Endothelial cell of umbilical vein (primary cell): ENCODE measurements at regions of chr2 and their contacts with region 1.

Region 1: DNA sequence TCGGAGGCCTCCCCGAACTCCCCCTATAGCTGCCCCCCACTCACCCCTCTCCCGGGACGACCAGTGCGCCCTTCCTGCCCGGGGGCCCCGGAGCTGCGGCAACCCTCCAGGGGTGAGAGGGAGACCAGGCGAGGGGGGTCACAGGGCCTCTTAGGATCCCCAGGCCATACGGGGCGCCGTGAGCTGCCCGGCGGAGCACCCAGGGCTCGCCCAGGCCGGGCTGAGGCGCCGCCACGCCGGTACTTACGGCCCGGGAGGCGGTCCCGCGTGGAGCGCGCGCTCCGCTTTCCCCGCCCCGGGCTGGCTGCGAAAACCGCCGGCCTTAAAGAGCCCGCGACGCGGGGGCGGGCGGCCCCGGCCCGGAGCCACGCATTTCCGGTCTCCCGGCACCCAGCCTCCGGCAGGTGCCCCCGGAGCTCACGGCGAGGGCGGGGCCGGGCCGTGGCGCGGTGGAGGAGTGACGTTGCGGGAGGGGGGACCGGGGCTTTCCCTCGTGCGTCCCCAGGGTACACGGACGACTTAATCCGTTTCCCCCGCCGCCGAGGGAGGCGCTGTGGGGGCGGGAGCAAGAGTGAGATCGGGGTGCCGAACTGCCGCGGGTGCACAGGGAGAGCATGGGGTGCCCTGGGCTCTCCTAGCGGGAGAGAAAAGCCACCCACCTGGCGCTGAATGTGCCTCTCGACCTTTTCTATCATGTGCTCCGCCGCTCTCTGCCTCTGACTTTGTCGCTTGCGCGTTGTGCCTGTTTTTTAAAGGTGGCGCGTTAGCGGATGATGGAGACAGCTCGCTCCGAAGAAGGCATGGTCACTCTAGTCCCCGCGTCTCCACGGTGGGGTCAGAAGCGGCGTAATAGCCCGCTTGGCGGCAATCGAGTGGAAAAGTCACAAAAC is at the start of gene METTL21A:
- DNase-seq: peak; percentile 86
- H3K4me3 ChIP-seq: peak within 1 kb of the TSS; percentile 20 to 75 (median 67)
- H3K27ac ChIP-seq: peak within 1 kb of the TSS; percentile 61
- H3K4me1 ChIP-seq: peaks cover 6% of the 10 kb centered on the region
- H3K27me3 ChIP-seq: no peaks in the 10 kb centered on the region
- CTCF ChIP-seq: peak; percentile 39 to 56
- POLR2A ChIP-seq: no peak
- total RNA-seq, gene METTL21A: 12.8 and 14.0 TPM in 2 replicates

Region 2: GRCh38 chr2:207676827-207677354 is 51.6 kb after region 1 on chr2:
- CTCF ChIA-PET with region 1: interaction called, 9 read pairs
- POLR2A ChIA-PET with region 1: no interaction called
- dilution Hi-C with region 1: no loop called
- intact Hi-C with region 1: loop called (anchors 1 kb)
- DNase-seq: peak; percentile 89
- H3K4me3 ChIP-seq: peak overlapping the region; percentile 16 to 70 (median 29)
- H3K27ac ChIP-seq: peak overlapping the region; percentile 94
- H3K4me1 ChIP-seq: peaks cover 17% of the 10 kb centered on the region
- H3K27me3 ChIP-seq: no peaks in the 10 kb centered on the region
- CTCF ChIP-seq: no peak
- POLR2A ChIP-seq: peak; percentile 24

Region 3: GRCh38 chr2:207710814-207711740 is 85.8 kb after region 1 on chr2 and contains the start of gene CCNYL1:
- CTCF ChIA-PET with region 1: interaction called, 35 read pairs
- POLR2A ChIA-PET with region 1: interaction called, 10 read pairs
- dilution Hi-C with region 1: no loop called
- intact Hi-C with region 1: loop called (anchors 1 kb)
- DNase-seq: peak; percentile 100
- H3K4me3 ChIP-seq: peak within 1 kb of the TSS; percentile 78 to 88 (median 78)
- H3K27ac ChIP-seq: peak within 1 kb of the TSS; percentile 86
- H3K4me1 ChIP-seq: peaks cover 21% of the 10 kb centered on the region
- H3K27me3 ChIP-seq: no peaks in the 10 kb centered on the region
- CTCF ChIP-seq: peak in 1 of 2 donors; percentile 3
- POLR2A ChIP-seq: peak; percentile 69
- total RNA-seq, gene CCNYL1: 47.3 and 49.3 TPM in 2 replicates

Region 4: GRCh38 chr2:207746131-207746530 is 120.9 kb after region 1 on chr2:
- CTCF ChIA-PET with region 1: interaction called, 25 read pairs
- POLR2A ChIA-PET with region 1: no interaction called
- dilution Hi-C with region 1: no loop called
- intact Hi-C with region 1: loop called (anchors 1 kb)
- DNase-seq: peak; percentile 65
- H3K4me3 ChIP-seq: no peak overlapping the region
- H3K27ac ChIP-seq: no peak overlapping the region
- H3K4me1 ChIP-seq: no peaks in the 10 kb centered on the region
- H3K27me3 ChIP-seq: no peaks in the 10 kb centered on the region
- CTCF ChIP-seq: peak; percentile 83 to 87
- POLR2A ChIP-seq: no peak

Region 5: DNA sequence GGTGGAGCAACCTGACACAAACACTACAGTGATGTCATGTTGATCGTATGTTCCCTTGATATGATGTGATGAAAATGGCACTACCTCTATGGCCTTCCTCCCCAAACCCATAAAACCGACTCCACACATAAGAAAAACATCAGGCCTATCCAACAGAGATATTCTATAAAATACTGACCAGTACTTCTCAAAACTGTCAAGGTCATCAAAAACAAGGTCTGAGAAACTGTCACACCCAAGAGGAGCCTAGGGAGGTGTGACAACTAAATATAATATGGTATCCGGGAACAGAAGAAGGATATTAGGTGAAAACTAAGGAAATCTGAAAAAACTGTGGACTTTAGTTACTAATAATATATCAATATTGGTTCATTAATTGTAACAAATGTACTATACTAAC is 230.3 kb after region 1 on chr2:
- CTCF ChIA-PET with region 1: no interaction called
- POLR2A ChIA-PET with region 1: no interaction called
- dilution Hi-C with region 1: no loop called
- intact Hi-C with region 1: no loop called
- DNase-seq: no peak
- H3K4me3 ChIP-seq: no peak overlapping the region
- H3K27ac ChIP-seq: no peak overlapping the region
- H3K4me1 ChIP-seq: no peaks in the 10 kb centered on the region
- H3K27me3 ChIP-seq: no peaks in the 10 kb centered on the region
- CTCF ChIP-seq: no peak
- POLR2A ChIP-seq: no peak

Region 6: GRCh38 chr2:207974216-207974605 is 348.9 kb after region 1 on chr2:
- CTCF ChIA-PET with region 1: interaction called, 17 read pairs
- POLR2A ChIA-PET with region 1: no interaction called
- dilution Hi-C with region 1: no loop called
- intact Hi-C with region 1: loop called (anchors 2 kb)
- DNase-seq: no peak
- H3K4me3 ChIP-seq: no peak overlapping the region
- H3K27ac ChIP-seq: no peak overlapping the region
- H3K4me1 ChIP-seq: no peaks in the 10 kb centered on the region
- H3K27me3 ChIP-seq: no peaks in the 10 kb centered on the region
- CTCF ChIP-seq: no peak
- POLR2A ChIP-seq: no peak

Region 7: GRCh38 chr2:208142240-208142924 is 517.1 kb after region 1 on chr2:
- CTCF ChIA-PET with region 1: no interaction called
- POLR2A ChIA-PET with region 1: no interaction called
- dilution Hi-C with region 1: no loop called
- intact Hi-C with region 1: no loop called
- DNase-seq: peak; percentile 6
- H3K4me3 ChIP-seq: no peak overlapping the region
- H3K27ac ChIP-seq: no peak overlapping the region
- H3K4me1 ChIP-seq: no peaks in the 10 kb centered on the region
- H3K27me3 ChIP-seq: no peaks in the 10 kb centered on the region
- CTCF ChIP-seq: no peak
- POLR2A ChIP-seq: no peak